H1 (cell line): ENCODE measurements at regions of chr12 and their contacts with region 1.

Region 1: DNA sequence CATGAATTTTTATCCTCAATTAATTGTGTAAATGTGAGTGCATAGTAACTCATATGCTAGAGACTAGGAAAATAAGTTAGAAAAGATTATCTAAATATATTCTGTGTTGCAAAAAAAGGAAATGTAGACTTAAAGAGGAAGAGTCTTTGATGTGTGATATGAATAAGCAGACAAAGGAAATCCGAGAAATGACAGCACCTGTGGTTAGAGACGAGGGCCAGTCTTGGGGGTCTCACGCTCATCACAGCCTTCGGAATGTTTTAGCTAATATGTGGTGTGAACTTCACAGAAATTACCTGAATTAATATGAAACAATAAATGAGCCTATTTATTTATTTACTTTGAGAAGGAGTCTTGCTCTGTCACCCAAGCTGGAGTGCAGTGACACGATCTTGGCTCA is 11.6 kb downstream of the ATP6V0A2 start:
- DNase-seq: no peak
- H3K4me3 ChIP-seq: no peak overlapping the region
- H3K27ac ChIP-seq: no peak overlapping the region
- H3K4me1 ChIP-seq: no peaks in the 10 kb centered on the region
- H3K27me3 ChIP-seq: no peaks in the 10 kb centered on the region
- CTCF ChIP-seq: no peak
- EP300 ChIP-seq: no peak
- POLR2A ChIP-seq: no peak
- RAD21 ChIP-seq: no peak

Region 2: GRCh38 chr12:123457980-123458783 is 265.6 kb before region 1 on chr12 and contains the start of gene SNRNP35:
- CTCF ChIA-PET with region 1: no interaction called
- POLR2A ChIA-PET with region 1: no interaction called
- DNase-seq: peak; percentile 43 to 81
- H3K4me3 ChIP-seq: peak within 1 kb of the TSS; percentile 77 to 98 (median 84)
- H3K27ac ChIP-seq: peak within 1 kb of the TSS; percentile 98
- H3K4me1 ChIP-seq: no peaks in the 10 kb centered on the region
- H3K27me3 ChIP-seq: no peaks in the 10 kb centered on the region
- CTCF ChIP-seq: no peak
- EP300 ChIP-seq: peak in 1 of 2 experiments; percentile 98; a peak in 1 of 3 replicates
- POLR2A ChIP-seq: peak; percentile 66 to 91
- RAD21 ChIP-seq: no peak
- total RNA-seq, gene SNRNP35: 15.3 and 16.9 TPM in 2 replicates

Region 3: DNA sequence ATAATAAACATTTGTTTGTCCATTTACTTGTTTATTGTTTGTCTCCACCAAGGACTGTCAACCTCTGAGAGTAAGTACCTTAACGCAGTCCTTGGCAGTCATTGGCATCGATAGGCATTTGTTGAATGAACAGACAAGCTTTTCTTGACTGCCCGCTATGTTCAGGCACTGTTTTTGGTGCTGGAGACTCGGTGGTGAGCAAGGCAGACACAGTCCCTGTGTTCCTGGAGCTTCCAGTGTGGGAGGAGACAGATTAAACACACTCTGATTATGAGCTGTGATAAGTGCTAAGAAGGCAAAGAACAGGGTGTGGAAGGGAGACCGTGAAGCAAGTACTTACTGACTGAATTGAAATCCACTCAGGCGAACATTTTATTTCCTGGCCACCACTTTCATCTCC is 10.4 kb before region 1 on chr12:
- CTCF ChIA-PET with region 1: interaction called, 3 read pairs
- POLR2A ChIA-PET with region 1: interaction called, 21 read pairs
- DNase-seq: no peak
- H3K4me3 ChIP-seq: peak overlapping the region; percentile 74 to 90 (median 80); a peak in 7 of 8 replicates
- H3K27ac ChIP-seq: no peak overlapping the region
- H3K4me1 ChIP-seq: peaks cover 0 to 9% (median 3%) of the 10 kb centered on the region in 4 experiments; a peak in 5 of 7 replicates
- H3K27me3 ChIP-seq: no peaks in the 10 kb centered on the region; a peak in 1 of 7 replicates
- CTCF ChIP-seq: no peak
- EP300 ChIP-seq: no peak
- POLR2A ChIP-seq: no peak
- RAD21 ChIP-seq: no peak

Region 4: DNA sequence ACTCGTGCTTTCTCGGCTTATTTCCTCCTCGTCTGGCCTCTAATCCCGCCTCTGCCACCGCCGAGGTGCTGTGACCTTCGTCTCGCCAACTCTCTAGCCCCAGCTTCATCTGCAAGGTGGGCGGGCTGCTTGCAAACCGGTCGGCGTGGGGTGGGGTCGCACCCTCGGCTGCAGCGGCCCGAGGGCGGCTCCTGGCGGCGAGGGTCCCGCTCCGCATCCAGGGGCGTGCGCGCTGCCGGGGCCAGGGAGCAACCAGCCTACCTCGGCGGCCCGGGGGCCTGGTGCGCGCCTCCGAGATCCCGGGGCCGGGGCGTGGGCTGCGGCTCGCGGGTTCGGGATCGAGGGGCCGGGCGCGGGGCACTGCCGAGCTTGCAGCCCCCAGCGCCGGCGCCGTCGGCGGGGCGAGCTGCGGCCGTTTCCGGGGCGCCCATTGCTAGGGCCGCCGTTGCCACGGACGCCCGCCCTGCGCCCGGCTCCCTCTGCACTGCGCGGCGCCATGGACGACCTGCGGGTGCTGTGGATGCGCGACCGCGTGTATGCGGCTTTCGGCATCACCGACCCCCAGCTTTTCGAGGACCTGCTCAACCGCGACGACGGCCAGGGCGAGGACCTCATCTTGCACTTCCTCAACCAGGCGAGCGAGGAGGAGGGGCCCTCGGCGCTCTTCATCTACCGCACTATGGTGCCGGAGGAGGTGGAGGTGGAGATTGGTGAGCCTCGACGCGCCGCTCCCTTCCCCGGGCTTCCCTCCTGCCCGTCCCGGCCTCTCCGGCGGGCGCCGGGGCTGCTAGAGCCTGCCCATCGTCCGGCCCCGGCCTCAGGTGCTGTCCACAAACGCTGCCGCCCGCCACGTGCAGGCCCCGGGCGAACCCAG is 38.3 kb after region 1 on chr12 and contains the start of gene DNAH10:
- CTCF ChIA-PET with region 1: no interaction called
- POLR2A ChIA-PET with region 1: no interaction called
- DNase-seq: peak; percentile 33 to 90
- H3K4me3 ChIP-seq: peak within 1 kb of the TSS; percentile 56 to 65 (median 60)
- H3K27ac ChIP-seq: no peak within 1 kb of the TSS
- H3K4me1 ChIP-seq: peaks cover 0 to 6% (median 5%) of the 10 kb centered on the region in 4 experiments; a peak in 4 of 7 replicates
- H3K27me3 ChIP-seq: peaks cover 0 to 5% (median 2%) of the 10 kb centered on the region in 4 experiments; a peak in 2 of 7 replicates
- CTCF ChIP-seq: peak; percentile 74 to 83 (median 78)
- EP300 ChIP-seq: no peak
- POLR2A ChIP-seq: peak in 1 of 2 experiments; percentile 54; a peak in 1 of 3 replicates
- RAD21 ChIP-seq: peak; percentile 59 to 71
- total RNA-seq, gene DNAH10: 0.24 and 0.27 TPM in 2 replicates

Region 5: DNA sequence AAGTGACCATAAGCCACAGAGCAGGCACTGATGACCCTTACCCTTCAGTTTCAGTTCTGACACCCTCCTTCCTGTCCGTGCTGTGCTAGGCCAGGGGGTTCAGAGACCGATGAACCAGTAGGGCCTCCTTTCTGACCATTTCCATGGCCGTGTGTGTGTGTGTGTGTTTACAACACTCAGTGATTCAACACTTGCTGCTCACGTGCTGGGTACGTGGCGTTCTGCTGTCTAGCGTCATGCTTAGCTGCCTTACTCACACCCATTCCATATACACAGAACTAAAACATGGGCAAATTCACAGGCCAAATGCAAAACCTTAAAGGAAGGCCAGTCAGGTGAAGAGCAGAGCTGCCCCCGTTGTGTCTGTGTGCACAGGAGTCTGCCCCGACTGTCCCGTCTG is 105.8 kb after region 1 on chr12:
- CTCF ChIA-PET with region 1: no interaction called
- POLR2A ChIA-PET with region 1: no interaction called
- DNase-seq: no peak
- H3K4me3 ChIP-seq: no peak overlapping the region
- H3K27ac ChIP-seq: no peak overlapping the region
- H3K4me1 ChIP-seq: no peaks in the 10 kb centered on the region
- H3K27me3 ChIP-seq: no peaks in the 10 kb centered on the region
- CTCF ChIP-seq: no peak
- EP300 ChIP-seq: no peak
- POLR2A ChIP-seq: no peak
- RAD21 ChIP-seq: no peak